BJ (cell line): ENCODE measurements at regions of chr16 and their contacts with region 1.

Region 1: DNA sequence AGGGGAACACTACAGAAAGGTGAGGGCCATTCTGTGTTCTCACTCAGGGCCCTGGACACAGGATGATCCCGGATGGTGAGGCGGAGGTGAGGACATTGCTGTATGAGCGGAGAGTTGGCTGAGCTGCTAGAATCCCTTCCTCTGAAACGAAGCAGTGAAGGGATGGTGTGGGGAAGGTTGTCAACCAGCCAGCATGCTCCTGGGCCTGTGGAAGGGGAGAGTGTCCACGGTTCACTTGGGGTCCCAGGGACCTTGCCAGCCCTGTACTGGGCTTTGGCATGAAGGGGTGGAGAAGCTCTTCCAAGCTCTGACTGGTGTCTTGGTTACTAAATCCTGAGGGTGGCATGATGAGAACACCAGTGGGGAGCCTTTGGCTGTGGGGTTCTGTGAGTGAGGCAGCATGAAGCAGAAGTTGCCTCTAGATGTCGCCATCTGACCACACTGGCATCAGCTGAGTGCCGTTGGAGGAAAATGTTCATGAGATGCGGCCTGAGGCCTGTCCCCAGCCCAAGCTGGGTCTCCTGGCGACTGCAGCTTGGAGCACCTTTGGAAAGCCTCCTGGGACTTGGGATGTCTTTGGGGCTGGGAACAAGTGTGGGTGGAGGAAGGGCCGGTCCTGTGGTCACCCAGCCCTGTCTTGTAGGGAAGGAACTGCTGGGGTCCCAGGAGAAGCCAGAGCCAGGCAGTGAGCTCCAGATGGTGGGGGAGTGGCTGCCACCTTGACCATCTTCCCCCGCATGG is 14.8 kb downstream of the PDP2 start:
- DNase-seq: no peak
- H3K4me3 ChIP-seq: no peak overlapping the region
- H3K27me3 ChIP-seq: no peaks in the 10 kb centered on the region
- CTCF ChIP-seq: peak; percentile 93

Region 2: GRCh38 chr16:66416939-66417700 is 478.0 kb before region 1 on chr16:
- CTCF ChIA-PET with region 1: no interaction called
- POLR2A ChIA-PET with region 1: no interaction called
- DNase-seq: no peak
- H3K4me3 ChIP-seq: no peak overlapping the region
- H3K27me3 ChIP-seq: no peaks in the 10 kb centered on the region
- CTCF ChIP-seq: no peak

Region 3: DNA sequence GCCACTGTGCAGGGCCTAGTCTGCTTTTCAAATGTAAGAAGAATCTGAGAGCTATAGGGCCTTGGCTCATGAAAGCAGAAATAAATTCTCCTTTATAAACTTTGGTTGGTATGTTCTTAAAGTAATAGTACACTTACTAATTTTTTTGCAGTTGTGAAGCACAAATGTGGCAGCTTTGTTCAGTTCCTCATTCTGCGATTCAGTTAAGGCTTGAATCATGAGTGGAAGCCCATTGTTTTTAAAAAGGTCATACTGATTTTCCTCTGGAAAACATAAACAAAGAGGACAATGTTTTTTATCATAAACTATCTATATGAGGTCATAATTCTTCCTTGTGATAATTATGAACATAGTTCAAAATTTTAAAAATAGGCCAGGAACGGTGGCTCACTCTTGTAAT is 120.1 kb before region 1 on chr16:
- CTCF ChIA-PET with region 1: no interaction called
- POLR2A ChIA-PET with region 1: no interaction called
- DNase-seq: no peak
- H3K4me3 ChIP-seq: no peak overlapping the region
- H3K27me3 ChIP-seq: no peaks in the 10 kb centered on the region
- CTCF ChIP-seq: no peak

Region 4: GRCh38 chr16:66880288-66881013 is 14.7 kb before region 1 on chr16 and contains the start of gene PDP2:
- CTCF ChIA-PET with region 1: interaction called, 11 read pairs
- POLR2A ChIA-PET with region 1: no interaction called
- DNase-seq: no peak
- H3K4me3 ChIP-seq: peak within 1 kb of the TSS; percentile 83
- H3K27me3 ChIP-seq: no peaks in the 10 kb centered on the region
- CTCF ChIP-seq: no peak
- polyA plus RNA-seq, gene PDP2: 8.1 and 10.3 TPM in 2 replicates

Region 5: DNA sequence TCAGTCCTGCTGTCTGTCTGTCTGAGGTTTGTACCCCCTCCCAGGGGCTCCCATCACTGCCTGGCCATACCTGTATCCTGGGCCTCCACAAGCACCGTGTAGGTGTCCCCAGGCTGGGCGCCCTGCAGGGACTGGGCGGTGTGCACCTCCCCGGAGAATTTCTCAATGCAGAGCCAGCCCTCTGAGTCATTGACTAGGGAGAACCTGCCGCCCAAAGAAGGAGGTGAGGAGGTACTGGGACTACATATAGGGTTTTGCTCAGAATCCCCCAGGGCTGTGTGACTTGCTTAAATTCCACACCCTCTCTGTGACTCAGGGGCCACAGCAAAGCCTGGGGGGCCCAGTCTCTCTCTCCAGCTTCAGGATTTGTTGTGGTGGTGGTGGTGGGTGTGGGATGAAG is 16.0 kb after region 1 on chr16:
- CTCF ChIA-PET with region 1: interaction called, 33 read pairs
- POLR2A ChIA-PET with region 1: no interaction called
- DNase-seq: no peak
- H3K4me3 ChIP-seq: no peak overlapping the region
- H3K27me3 ChIP-seq: peaks cover 2% of the 10 kb centered on the region
- CTCF ChIP-seq: no peak

Region 6: DNA sequence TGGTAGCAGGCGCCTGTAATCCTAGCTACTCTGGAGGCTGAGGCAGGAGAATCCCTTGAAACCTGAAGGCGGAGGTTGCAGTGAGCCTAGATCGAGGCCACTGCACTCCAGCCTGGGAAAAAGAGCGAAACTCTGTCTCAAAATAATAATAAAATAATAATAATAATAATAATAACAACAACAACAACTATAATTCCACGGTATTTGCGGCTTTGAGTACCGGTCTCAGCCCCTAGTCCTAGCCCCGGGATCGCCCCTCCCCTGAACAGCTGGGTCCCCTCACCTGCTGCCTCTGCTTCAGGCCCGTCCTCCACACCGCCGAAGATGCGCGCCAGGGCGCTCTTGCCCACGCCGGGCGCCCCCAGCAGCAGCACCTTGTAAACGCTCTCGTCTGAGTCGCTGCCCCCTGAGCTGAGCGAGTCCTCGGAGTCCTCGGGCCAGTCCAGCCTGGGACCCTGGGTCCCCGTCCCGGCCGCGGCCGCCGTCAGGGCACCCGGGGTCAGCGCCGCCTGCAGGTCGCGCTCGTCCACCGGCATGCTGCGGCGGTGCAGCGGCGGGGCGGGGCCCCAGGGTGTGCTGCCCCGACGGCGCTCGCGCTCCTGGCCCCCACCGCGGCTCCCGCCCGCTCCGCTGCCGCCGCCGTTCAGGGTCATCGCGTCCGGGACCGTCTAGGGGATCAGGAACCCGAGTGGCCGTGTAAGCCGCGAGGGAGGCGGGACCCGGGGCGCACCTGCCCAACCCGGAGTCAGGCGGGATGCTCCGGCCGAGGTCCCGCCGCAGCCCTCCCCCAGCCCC is 29.6 kb after region 1 on chr16:
- CTCF ChIA-PET with region 1: interaction called, 118 read pairs
- POLR2A ChIA-PET with region 1: no interaction called
- DNase-seq: no peak
- H3K4me3 ChIP-seq: peak overlapping the region; percentile 45
- H3K27me3 ChIP-seq: peaks cover 9% of the 10 kb centered on the region
- CTCF ChIP-seq: no peak

Region 7: GRCh38 chr16:66947302-66948065 is 52.4 kb after region 1 on chr16:
- CTCF ChIA-PET with region 1: interaction called, 26 read pairs
- POLR2A ChIA-PET with region 1: no interaction called
- DNase-seq: peak; percentile 52
- H3K4me3 ChIP-seq: peak overlapping the region; percentile 44
- H3K27me3 ChIP-seq: peaks cover 7% of the 10 kb centered on the region
- CTCF ChIP-seq: peak; percentile 84

Region 8: DNA sequence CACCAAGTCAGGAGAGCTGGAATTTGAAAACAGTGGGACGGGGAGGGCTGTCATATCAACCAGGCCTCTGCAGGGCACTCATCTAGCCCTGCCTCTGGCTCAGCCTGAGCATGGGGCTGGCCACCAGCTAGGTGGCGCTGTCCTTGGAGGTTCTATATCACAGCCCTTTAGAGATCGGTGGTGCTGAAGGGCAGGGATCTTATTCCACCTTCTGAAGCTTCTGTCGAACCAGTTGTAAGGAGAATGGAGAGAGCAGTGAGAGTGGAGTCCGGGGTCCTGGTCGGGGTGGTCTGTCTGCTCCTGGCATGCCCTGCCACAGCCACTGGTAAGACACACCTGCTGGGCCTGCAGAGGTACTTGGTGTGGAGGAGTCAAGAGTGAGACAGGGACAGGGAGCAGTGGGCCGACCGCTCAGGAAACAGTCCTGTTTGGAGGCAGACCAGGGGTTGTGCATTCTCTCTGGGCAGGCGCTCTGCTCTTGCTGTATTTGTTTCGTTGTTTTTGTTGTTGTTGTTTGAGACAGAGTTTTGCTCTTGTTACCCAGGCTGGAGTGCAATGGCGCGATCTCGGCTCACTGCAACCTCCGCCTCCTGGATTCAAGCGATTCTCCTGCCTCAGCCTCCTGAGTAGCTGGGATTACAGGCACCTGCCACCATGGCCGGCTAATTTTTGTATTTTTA is 66.1 kb after region 1 on chr16 and contains the start of gene CES3:
- CTCF ChIA-PET with region 1: interaction called, 16 read pairs
- POLR2A ChIA-PET with region 1: no interaction called
- DNase-seq: no peak
- H3K4me3 ChIP-seq: no peak within 1 kb of the TSS
- H3K27me3 ChIP-seq: peaks cover 17% of the 10 kb centered on the region
- CTCF ChIP-seq: peak; percentile 86
- polyA plus RNA-seq, gene CES3: 0.07 and 0.13 TPM in 2 replicates